ENCODE measurements at regions of chr12 and their contacts with region 1.

Region 1: DNA sequence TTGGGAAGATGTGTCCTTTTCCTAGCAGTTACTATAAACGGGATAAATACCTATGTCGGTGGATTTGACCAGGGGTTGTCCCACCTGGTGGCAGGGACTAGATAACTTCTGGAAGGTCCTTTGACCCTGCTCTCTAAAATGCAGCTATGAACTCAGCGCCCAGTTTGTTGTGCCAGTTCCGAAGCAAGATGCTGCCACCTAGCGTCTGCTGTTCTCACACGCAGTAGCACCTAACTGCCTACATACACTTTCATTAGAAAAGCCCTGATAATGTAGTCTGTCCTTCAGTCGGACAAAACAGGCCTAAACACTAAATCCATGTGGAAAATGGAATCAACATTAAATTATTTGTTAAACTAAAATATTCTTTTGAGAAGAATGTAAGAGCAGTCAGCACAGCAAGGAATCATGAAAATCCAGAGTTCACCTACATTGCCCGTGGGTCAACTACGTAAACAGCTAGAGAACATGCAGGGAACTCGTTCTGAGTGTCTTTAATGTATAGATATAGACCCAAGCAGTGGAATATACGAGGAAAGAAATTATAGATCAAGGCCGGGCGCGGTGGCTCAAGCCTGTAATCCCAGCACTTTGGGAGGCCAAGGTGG is 51.1 kb upstream of the CRACR2A start:
- DNase-seq: peak; percentile 65
- H3K4me3 ChIP-seq: no peak overlapping the region
- CTCF ChIP-seq: peak; percentile 94

Region 2: DNA sequence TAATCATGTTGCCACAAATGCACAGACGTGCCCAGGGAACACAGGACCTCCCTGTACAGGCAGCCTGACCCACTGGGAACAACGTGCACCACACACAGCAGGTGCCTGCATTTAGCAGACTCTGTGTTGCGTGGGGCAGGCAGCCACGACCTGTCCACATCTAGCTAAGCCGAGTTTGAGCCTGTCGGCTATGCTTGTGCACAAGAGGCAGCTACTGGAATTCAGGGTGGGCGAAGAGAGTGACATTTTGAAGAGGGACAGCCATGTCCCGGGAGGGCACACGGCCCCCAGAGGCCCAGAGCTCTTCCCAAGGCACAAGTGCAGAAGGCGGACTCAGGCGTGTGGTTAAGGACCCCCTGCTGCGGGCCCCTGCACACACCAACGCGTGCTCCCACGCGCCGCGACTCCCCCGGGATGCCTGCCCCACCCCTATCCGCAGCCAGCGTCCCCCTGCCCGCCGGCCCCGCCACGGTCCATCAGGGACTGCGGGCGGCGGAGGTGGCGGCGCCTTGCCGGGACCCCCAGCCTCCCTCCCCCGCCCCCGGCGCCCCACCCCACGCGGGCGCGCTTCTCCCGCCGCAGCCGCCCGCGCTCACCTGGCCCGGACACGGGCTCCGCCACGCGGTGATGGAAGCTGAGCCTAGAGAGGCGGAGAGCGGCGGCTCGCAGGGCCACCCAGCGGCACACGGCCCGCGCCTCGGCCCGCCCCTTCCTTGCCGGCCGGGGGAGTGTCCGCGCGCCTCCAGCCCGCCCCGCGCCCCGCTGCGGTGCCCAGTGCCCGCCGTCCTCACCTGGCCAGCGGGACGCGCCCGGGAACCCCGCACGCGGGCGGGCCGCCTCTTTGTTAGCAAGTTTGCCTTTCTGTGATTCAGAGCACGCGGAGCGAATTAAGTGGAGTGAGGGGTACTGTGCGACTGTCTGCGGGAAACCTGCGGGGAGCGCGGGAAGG is 438.2 kb before region 1 on chr12:
- in situ Hi-C with region 1: loop called (anchors 25 kb)
- DNase-seq: no peak
- H3K4me3 ChIP-seq: no peak overlapping the region
- CTCF ChIP-seq: no peak

Region 3: GRCh38 chr12:3604748-3605586 is 199.0 kb before region 1 on chr12:
- in situ Hi-C with region 1: no loop called
- DNase-seq: peak; percentile 14
- H3K4me3 ChIP-seq: no peak overlapping the region
- CTCF ChIP-seq: no peak

Region 4: GRCh38 chr12:3658327-3659163 is 145.4 kb before region 1 on chr12:
- in situ Hi-C with region 1: no loop called
- DNase-seq: no peak
- H3K4me3 ChIP-seq: no peak overlapping the region
- CTCF ChIP-seq: peak; percentile 61